ENCODE measurements at regions of chr12 and their contacts with region 1.

Region 1: GRCh38 chr12:45388545-45388944 is 172.7 kb downstream of the ANO6 start:
- DNase-seq: peak; percentile 16
- ATAC-seq: peak; percentile 39
- H3K4me3 Mint-ChIP-seq: no peak overlapping the region
- H3K27ac Mint-ChIP-seq: no peak overlapping the region
- H3K4me1 Mint-ChIP-seq: no peaks in the 10 kb centered on the region
- H3K27me3 Mint-ChIP-seq: no peaks in the 10 kb centered on the region
- CTCF ChIP-seq: peak; percentile 18

Region 2: GRCh38 chr12:45183246-45183645 is 205.3 kb before region 1 on chr12:
- CTCF ChIA-PET with region 1: interaction called, 17 read pairs
- POLR2A ChIA-PET with region 1: no interaction called
- intact Hi-C with region 1: no loop called
- DNase-seq: no peak
- ATAC-seq: no peak
- H3K4me3 Mint-ChIP-seq: no peak overlapping the region
- H3K27ac Mint-ChIP-seq: no peak overlapping the region
- H3K4me1 Mint-ChIP-seq: no peaks in the 10 kb centered on the region
- H3K27me3 Mint-ChIP-seq: no peaks in the 10 kb centered on the region
- CTCF ChIP-seq: peak; percentile 46